B cell (primary cell): ENCODE measurements at regions of chr2 and their contacts with region 1.

Region 1: DNA sequence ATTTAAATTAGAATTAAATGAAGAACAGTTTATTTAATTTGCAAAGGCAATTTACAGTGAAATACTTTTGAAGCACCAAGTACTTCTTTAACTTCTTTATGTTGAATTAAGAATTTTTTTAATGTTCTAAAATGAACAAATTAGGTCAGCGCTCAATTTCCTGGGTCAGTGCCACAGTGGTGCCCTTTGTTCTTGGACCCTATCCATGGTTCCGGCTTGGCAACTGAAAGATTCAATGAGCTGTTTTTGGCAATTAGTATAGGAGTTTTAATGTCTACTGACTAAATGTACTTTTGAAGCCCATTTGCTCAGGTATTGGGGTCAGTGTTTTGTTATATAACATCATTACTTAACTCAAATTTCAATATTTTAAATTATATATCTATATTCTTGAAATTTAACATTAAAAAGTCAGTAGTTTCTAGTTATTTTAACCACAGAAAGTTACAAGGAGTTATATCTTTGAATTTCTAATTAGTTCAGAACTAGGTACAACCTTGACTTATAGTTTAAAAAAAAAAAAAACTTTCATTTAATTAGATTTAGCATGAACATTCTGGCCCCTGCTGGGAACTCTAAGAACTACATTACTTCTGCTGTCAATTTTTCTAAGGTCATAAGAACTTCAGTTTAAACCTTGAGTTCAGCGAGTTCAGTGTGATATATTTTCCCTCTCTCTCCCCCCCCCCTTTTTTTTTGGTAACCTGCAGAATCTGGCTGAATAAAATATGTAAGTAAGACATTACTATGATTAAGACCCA is 7.6 kb upstream of the MSTN start:
- DNase-seq: peak; percentile 70
- ATAC-seq: peak; percentile 51
- H3K4me3 ChIP-seq: no peak overlapping the region
- H3K4me3 Mint-ChIP-seq: no peak overlapping the region
- H3K27ac ChIP-seq: no peak overlapping the region
- H3K27ac Mint-ChIP-seq: no peak overlapping the region
- H3K4me1 ChIP-seq: no peaks in the 10 kb centered on the region
- H3K4me1 Mint-ChIP-seq: no peaks in the 10 kb centered on the region
- H3K27me3 ChIP-seq: no peaks in the 10 kb centered on the region
- H3K27me3 Mint-ChIP-seq: no peaks in the 10 kb centered on the region
- CTCF ChIP-seq: peak; percentile 76

Region 2: DNA sequence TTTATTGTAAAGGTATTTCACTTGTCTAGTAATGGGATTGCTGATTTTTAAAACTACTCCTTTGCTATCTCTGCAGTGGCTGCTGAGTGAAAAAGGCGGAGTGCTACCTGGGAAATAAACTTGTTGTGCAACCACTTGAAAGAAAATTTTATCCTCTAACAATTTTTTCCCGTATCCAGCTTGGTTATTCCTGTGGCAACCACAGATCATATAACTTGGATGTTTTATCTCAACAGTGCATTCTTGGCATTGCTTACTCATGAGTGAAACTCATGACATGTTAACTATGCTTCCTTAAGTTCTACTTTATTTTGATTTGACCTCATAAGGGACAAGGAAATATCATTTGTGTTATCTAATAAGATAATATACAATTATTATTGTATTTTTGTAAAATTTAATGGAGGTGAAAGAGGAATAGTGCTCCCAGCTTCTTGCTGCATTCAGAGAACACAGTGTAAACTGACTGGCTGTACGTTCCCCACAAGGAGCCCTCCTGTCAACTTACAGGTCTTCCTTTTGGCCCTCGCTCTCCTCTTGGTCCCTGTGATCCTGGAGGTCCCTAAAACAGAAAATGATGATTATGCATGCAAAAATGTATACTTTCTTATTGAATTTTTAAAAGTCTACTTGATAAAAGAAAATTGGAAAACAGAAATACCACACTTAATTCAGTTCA is 973.2 kb before region 1 on chr2:
- CTCF ChIA-PET with region 1: interaction called, 3 read pairs
- POLR2A ChIA-PET with region 1: no interaction called
- intact Hi-C with region 1: loop called (anchors 5 kb)
- DNase-seq: no peak
- ATAC-seq: no peak
- H3K4me3 ChIP-seq: no peak overlapping the region
- H3K4me3 Mint-ChIP-seq: no peak overlapping the region
- H3K27ac ChIP-seq: no peak overlapping the region
- H3K27ac Mint-ChIP-seq: no peak overlapping the region
- H3K4me1 ChIP-seq: no peaks in the 10 kb centered on the region
- H3K4me1 Mint-ChIP-seq: no peaks in the 10 kb centered on the region
- H3K27me3 ChIP-seq: no peaks in the 10 kb centered on the region
- H3K27me3 Mint-ChIP-seq: no peaks in the 10 kb centered on the region
- CTCF ChIP-seq: no peak

Region 3: DNA sequence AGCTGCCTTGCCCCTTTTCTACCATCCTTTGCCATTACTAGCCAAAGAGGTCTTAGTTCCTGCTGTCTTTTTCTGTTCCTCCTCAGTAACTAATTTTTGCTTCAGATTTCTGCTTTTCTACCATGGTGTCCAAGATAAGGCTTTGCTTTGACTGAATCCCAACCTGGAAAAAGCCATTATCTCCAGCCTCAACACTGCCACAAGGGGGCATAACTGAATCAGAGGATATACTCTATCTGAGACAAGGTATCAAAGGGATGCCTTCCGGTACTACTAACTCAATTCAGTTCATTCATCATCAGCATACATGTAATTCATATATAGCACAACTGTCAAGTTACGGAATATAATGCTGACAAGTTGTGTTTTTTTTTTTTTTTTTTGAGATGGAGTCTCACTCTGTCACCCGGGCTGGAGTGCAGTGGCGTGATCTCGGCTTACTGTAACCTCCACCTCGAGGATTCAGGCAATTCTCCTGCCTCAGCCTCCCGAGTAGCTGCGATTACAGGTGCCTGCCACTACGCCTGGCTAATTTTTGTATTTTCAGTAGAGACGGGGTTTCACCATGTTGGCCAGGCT is 318.9 kb before region 1 on chr2:
- CTCF ChIA-PET with region 1: interaction called, 9 read pairs
- POLR2A ChIA-PET with region 1: no interaction called
- intact Hi-C with region 1: loop called (anchors 1 kb)
- DNase-seq: peak; percentile 53
- ATAC-seq: no peak
- H3K4me3 ChIP-seq: no peak overlapping the region
- H3K4me3 Mint-ChIP-seq: no peak overlapping the region
- H3K27ac ChIP-seq: no peak overlapping the region
- H3K27ac Mint-ChIP-seq: peak overlapping the region; percentile 67
- H3K4me1 ChIP-seq: no peaks in the 10 kb centered on the region
- H3K4me1 Mint-ChIP-seq: no peaks in the 10 kb centered on the region
- H3K27me3 ChIP-seq: no peaks in the 10 kb centered on the region
- H3K27me3 Mint-ChIP-seq: no peaks in the 10 kb centered on the region
- CTCF ChIP-seq: peak; percentile 69

Region 4: DNA sequence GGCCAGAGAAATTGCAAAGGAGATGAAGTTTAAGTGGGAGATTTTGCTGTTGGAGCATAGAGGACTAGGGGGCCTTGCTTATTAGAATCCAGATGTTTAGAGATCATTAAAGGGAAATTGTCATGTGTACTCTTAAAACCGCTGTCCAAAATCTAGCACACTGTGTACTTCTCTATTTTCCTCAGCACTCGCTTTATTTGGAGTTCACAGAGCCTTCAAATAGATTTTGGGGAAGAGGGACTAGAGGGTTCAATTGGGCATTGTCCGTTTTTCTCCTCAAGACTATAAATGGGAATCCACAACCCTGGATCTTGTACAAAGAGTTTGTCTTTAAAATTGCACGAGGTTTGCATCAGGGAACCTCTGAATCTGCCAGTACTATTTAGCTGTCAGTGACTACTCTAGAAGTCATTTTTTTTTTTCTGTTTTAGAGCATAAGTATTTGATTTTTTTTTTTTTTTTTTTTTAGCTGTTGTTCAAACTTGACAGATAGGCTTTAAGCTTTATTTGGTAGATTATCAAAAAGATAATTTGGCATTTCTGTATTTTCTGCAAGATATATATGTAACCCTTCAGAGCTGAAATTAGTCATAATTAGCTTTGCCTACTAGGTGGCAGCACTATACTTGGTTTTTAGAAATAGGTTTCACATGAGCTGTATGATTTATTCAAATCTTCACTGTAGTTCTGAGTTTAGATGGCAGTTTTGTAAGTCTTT is 271.6 kb before region 1 on chr2:
- CTCF ChIA-PET with region 1: interaction called, 5 read pairs
- POLR2A ChIA-PET with region 1: no interaction called
- intact Hi-C with region 1: loop called (anchors 2 kb)
- DNase-seq: peak; percentile 39
- ATAC-seq: no peak
- H3K4me3 ChIP-seq: no peak overlapping the region
- H3K4me3 Mint-ChIP-seq: no peak overlapping the region
- H3K27ac ChIP-seq: no peak overlapping the region
- H3K27ac Mint-ChIP-seq: no peak overlapping the region
- H3K4me1 ChIP-seq: no peaks in the 10 kb centered on the region
- H3K4me1 Mint-ChIP-seq: peaks cover 6% of the 10 kb centered on the region
- H3K27me3 ChIP-seq: no peaks in the 10 kb centered on the region
- H3K27me3 Mint-ChIP-seq: no peaks in the 10 kb centered on the region
- CTCF ChIP-seq: peak; percentile 49

Region 5: DNA sequence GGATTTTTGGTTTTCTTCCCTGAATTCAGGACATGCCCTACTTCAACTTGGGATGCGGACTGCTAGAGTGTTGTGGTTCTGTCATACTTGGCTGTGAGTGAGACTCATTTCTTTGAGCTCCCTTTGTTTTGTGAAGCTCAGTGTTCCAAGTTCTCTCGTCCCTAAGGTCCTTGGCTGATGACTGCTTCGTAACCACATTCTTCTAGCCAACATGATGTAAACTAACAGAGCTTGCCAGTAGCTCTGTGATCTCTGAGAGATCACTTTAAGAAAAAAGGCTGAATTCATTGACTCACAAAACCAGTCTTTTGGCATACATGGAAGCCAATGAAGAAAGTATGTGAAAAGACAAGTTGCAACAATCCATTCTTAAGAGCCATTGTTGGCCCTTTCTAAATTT is 89.3 kb after region 1 on chr2:
- CTCF ChIA-PET with region 1: no interaction called
- POLR2A ChIA-PET with region 1: no interaction called
- intact Hi-C with region 1: no loop called
- DNase-seq: no peak
- ATAC-seq: no peak
- H3K4me3 ChIP-seq: no peak overlapping the region
- H3K4me3 Mint-ChIP-seq: no peak overlapping the region
- H3K27ac ChIP-seq: no peak overlapping the region
- H3K27ac Mint-ChIP-seq: no peak overlapping the region
- H3K4me1 ChIP-seq: no peaks in the 10 kb centered on the region
- H3K4me1 Mint-ChIP-seq: peaks cover 7% of the 10 kb centered on the region
- H3K27me3 ChIP-seq: peaks cover 0 to 5% (median 0%) of the 10 kb centered on the region in 4 experiments
- H3K27me3 Mint-ChIP-seq: no peaks in the 10 kb centered on the region
- CTCF ChIP-seq: no peak